HEK293 (cell line): ENCODE measurements at regions of chr22 and their contacts with region 1.

Region 1: GRCh38 chr22:21629262-21630149 is at the start of gene YDJC:
- H3K4me3 ChIP-seq: peak within 1 kb of the TSS; percentile 87
- H3K27ac ChIP-seq: peak within 1 kb of the TSS; percentile 76
- H3K4me1 ChIP-seq: no peaks in the 10 kb centered on the region
- CTCF ChIP-seq: peak; percentile 91

Region 2: GRCh38 chr22:21573750-21574494 is 55.6 kb before region 1 on chr22:
- CTCF ChIA-PET with region 1: interaction called, 12 read pairs
- POLR2A ChIA-PET with region 1: interaction called, 11 read pairs
- H3K4me3 ChIP-seq: no peak overlapping the region
- H3K27ac ChIP-seq: no peak overlapping the region
- H3K4me1 ChIP-seq: peaks cover 10% of the 10 kb centered on the region
- CTCF ChIP-seq: no peak

Region 3: GRCh38 chr22:21615731-21616130 is 13.8 kb before region 1 on chr22:
- CTCF ChIA-PET with region 1: interaction called, 26 read pairs
- POLR2A ChIA-PET with region 1: interaction called, 8 read pairs
- H3K4me3 ChIP-seq: no peak overlapping the region
- H3K27ac ChIP-seq: no peak overlapping the region
- H3K4me1 ChIP-seq: no peaks in the 10 kb centered on the region
- CTCF ChIP-seq: no peak

Region 4: GRCh38 chr22:21665047-21665851 is 35.7 kb after region 1 on chr22:
- CTCF ChIA-PET with region 1: no interaction called
- POLR2A ChIA-PET with region 1: no interaction called
- H3K4me3 ChIP-seq: peak overlapping the region; percentile 75
- H3K27ac ChIP-seq: no peak overlapping the region
- H3K4me1 ChIP-seq: no peaks in the 10 kb centered on the region
- CTCF ChIP-seq: no peak

Region 5: DNA sequence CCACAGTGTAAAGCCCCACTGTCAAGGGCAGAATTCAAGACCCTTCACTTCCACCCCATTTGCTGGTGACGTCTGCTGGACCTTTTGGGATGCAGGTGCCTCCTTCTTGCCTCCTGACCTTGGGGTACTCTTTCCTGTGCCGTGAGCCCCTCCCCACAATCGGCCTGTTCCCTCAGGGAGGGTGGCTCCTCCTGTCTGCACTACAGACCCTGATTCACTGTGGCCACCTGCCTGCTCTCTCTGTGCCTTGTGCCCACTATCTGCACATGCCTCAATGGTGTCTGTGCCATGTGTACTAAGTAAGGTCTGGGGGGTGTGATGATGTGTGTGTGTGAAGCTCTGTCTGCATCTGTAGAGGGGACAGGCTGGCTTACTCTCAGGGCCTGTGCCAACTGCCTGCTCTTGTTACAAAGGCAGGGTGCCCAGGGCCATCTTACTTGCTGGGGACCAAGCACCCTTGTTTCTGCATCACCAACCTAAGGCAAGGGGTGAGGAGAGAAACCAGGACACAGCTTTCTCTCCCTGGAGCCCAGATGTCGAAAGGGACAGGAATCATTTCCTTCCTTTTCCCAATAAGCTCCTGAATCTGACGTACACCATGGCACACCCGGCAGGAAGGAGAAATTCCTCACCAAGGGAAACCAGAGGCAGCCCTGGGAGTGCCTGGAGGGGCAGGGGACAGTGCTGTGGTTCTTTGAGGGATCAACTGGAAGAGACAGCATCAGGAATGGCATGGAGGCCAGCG is 319.5 kb after region 1 on chr22:
- CTCF ChIA-PET with region 1: no interaction called
- POLR2A ChIA-PET with region 1: no interaction called
- H3K4me3 ChIP-seq: no peak overlapping the region
- H3K27ac ChIP-seq: no peak overlapping the region
- H3K4me1 ChIP-seq: no peaks in the 10 kb centered on the region
- CTCF ChIP-seq: no peak